Activated CD4-positive, alpha-beta T cell treated with anti-CD3 and anti-CD28 coated beads for 36 hours (primary cell): ENCODE measurements at regions of chr5 and their contacts with region 1.

Region 1: GRCh38 chr5:129125810-129126209 is 31.3 kb downstream of the ISOC1 start:
- DNase-seq: no peak
- ATAC-seq: peak; percentile 57
- H3K4me3 Mint-ChIP-seq: no peak overlapping the region
- H3K27ac Mint-ChIP-seq: peak overlapping the region; percentile 42
- H3K4me1 Mint-ChIP-seq: peaks cover 11% of the 10 kb centered on the region
- H3K27me3 Mint-ChIP-seq: no peaks in the 10 kb centered on the region

Region 2: DNA sequence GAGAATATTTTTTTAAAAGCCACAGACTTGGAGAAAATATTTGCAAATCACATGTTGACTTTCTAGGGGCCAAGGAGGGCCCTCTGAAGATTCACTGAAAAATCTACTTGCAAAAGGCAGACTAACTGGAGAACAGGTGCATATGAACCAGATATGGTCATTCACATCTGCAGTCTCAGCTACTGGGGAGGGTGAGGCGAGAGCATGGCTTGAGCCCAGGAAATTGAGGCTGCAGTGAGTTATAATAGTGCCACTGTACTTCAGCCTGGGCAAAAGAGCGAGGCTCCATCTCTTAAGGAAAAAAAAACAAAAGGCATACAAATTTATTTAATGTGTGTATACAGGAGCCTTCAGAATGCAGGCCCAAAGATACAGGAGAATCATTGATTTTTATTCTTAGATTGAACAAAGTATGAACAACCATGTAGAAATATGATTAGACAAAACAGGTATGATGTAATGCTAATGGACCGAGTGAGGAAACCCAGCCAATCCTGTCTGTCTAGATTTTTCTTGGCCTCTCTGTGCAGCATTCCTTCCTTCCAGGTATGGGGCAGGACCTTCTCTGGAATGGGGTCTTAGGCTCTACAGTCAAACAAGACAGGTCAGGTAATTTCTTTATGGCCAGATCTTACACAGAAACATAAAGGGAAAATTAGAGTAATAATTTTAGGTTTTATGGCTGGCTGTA is 175.8 kb before region 1 on chr5:
- CTCF ChIA-PET with region 1: no interaction called
- POLR2A ChIA-PET with region 1: no interaction called
- intact Hi-C with region 1: no loop called
- DNase-seq: no peak
- ATAC-seq: no peak
- H3K4me3 Mint-ChIP-seq: no peak overlapping the region
- H3K27ac Mint-ChIP-seq: no peak overlapping the region
- H3K4me1 Mint-ChIP-seq: no peaks in the 10 kb centered on the region
- H3K27me3 Mint-ChIP-seq: peaks cover 6% of the 10 kb centered on the region

Region 3: DNA sequence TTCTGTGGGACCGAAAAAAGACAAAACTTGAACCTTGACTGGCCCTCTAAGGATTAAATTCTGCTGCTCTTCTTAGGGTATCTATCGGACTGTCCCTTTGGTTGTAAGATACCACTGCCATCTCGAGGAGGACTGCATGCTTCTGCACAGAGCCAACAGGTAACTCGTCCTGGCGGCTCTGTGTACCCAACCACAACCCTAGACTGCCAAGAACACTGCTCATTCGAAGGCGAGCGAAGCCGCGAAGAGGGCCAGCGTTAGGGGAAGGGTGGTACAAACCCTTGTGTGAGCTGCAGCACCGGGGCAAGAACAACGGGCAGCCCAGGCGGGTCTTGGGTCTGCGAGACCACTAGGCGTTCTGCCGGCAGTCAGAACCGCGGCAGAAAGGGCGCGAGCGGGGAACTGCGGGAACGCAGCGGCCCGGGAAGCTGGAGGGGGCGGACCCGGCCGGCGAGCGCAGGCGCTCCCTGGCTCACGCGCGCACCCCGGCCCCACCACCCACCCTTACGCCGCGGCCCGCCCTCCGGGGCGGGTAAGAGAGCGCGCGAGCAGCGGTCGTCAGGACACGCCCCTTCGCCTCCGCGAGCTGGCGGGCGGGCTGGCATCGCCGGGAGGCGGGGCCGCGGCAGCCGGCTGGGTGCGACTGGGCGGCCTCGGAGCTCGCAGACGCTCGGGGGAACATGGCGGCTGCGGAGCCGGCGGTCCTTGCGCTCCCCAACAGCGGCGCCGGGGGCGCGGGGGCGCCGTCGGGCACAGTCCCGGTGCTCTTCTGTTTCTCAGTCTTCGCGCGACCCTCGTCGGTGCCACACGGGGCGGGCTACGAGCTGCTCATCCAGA is 31.5 kb before region 1 on chr5 and contains the start of gene ISOC1:
- CTCF ChIA-PET with region 1: interaction called, 9 read pairs
- POLR2A ChIA-PET with region 1: interaction called, 3 read pairs
- intact Hi-C with region 1: loop called in 1 of 2 experiments (anchors 1 kb)
- DNase-seq: peak; percentile 95
- ATAC-seq: peak; percentile 94
- H3K4me3 Mint-ChIP-seq: peak within 1 kb of the TSS; percentile 79
- H3K27ac Mint-ChIP-seq: peak within 1 kb of the TSS; percentile 37
- H3K4me1 Mint-ChIP-seq: peaks cover 25% of the 10 kb centered on the region
- H3K27me3 Mint-ChIP-seq: peaks cover 8% of the 10 kb centered on the region
- total RNA-seq, gene ISOC1: 21.5 to 25.3 TPM